ENCODE measurements at regions of chr12 and their contacts with region 1.

Region 1: GRCh38 chr12:77925536-77926108 is 94.9 kb downstream of the NAV3 start:
- DNase-seq: no peak
- ATAC-seq: no peak
- H3K4me3 ChIP-seq: no peak overlapping the region
- H3K4me3 Mint-ChIP-seq: no peak overlapping the region
- H3K27ac ChIP-seq: no peak overlapping the region
- H3K27ac Mint-ChIP-seq: no peak overlapping the region
- H3K4me1 ChIP-seq: no peaks in the 10 kb centered on the region
- H3K4me1 Mint-ChIP-seq: no peaks in the 10 kb centered on the region
- H3K27me3 ChIP-seq: no peaks in the 10 kb centered on the region
- H3K27me3 Mint-ChIP-seq: no peaks in the 10 kb centered on the region

Region 2: GRCh38 chr12:76790564-76791552 is 1134.8 kb before region 1 on chr12:
- CTCF ChIA-PET with region 1: no interaction called
- POLR2A ChIA-PET with region 1: no interaction called
- DNase-seq: peak in 1 of 35 experiments; percentile 56
- ATAC-seq: peak in 1 of 4 experiments; percentile 45
- H3K4me3 ChIP-seq: no peak overlapping the region
- H3K4me3 Mint-ChIP-seq: no peak overlapping the region
- H3K27ac ChIP-seq: no peak overlapping the region
- H3K27ac Mint-ChIP-seq: peak overlapping the region; percentile 3 to 35
- H3K4me1 ChIP-seq: peaks cover 0 to 3% of the 10 kb centered on the region in 2 experiments
- H3K4me1 Mint-ChIP-seq: peaks cover 34 to 48% (median 39%) of the 10 kb centered on the region in 3 donors
- H3K27me3 ChIP-seq: no peaks in the 10 kb centered on the region
- H3K27me3 Mint-ChIP-seq: no peaks in the 10 kb centered on the region

Region 3: GRCh38 chr12:77893918-77894317 is 31.7 kb before region 1 on chr12:
- CTCF ChIA-PET with region 1: no interaction called
- POLR2A ChIA-PET with region 1: no interaction called
- DNase-seq: no peak
- ATAC-seq: no peak
- H3K4me3 ChIP-seq: no peak overlapping the region
- H3K4me3 Mint-ChIP-seq: no peak overlapping the region
- H3K27ac ChIP-seq: no peak overlapping the region
- H3K27ac Mint-ChIP-seq: no peak overlapping the region
- H3K4me1 ChIP-seq: no peaks in the 10 kb centered on the region
- H3K4me1 Mint-ChIP-seq: no peaks in the 10 kb centered on the region
- H3K27me3 ChIP-seq: no peaks in the 10 kb centered on the region
- H3K27me3 Mint-ChIP-seq: no peaks in the 10 kb centered on the region

Region 4: GRCh38 chr12:77907936-77908335 is 17.7 kb before region 1 on chr12:
- CTCF ChIA-PET with region 1: no interaction called
- POLR2A ChIA-PET with region 1: no interaction called
- DNase-seq: no peak
- ATAC-seq: no peak
- H3K4me3 ChIP-seq: no peak overlapping the region
- H3K4me3 Mint-ChIP-seq: no peak overlapping the region
- H3K27ac ChIP-seq: no peak overlapping the region
- H3K27ac Mint-ChIP-seq: no peak overlapping the region
- H3K4me1 ChIP-seq: no peaks in the 10 kb centered on the region
- H3K4me1 Mint-ChIP-seq: no peaks in the 10 kb centered on the region
- H3K27me3 ChIP-seq: no peaks in the 10 kb centered on the region
- H3K27me3 Mint-ChIP-seq: no peaks in the 10 kb centered on the region

Region 5: GRCh38 chr12:78431931-78432330 is 506.3 kb after region 1 on chr12:
- CTCF ChIA-PET with region 1: no interaction called
- POLR2A ChIA-PET with region 1: interaction called in 1 of 2 experiments, 13 read pairs
- DNase-seq: no peak
- ATAC-seq: no peak
- H3K4me3 ChIP-seq: no peak overlapping the region
- H3K4me3 Mint-ChIP-seq: no peak overlapping the region
- H3K27ac ChIP-seq: no peak overlapping the region
- H3K27ac Mint-ChIP-seq: no peak overlapping the region
- H3K4me1 ChIP-seq: no peaks in the 10 kb centered on the region
- H3K4me1 Mint-ChIP-seq: no peaks in the 10 kb centered on the region
- H3K27me3 ChIP-seq: no peaks in the 10 kb centered on the region
- H3K27me3 Mint-ChIP-seq: no peaks in the 10 kb centered on the region